GM12878 (cell line): ENCODE measurements at regions of chr11 and their contacts with region 1.

Region 1: GRCh38 chr11:7473717-7474116 is 11.6 kb upstream of the OLFML1 start:
- DNase-seq: peak; percentile 40
- ATAC-seq: peak; percentile 98
- H3K4me3 ChIP-seq: no peak overlapping the region
- H3K27ac ChIP-seq: peak overlapping the region; percentile 18; the same call in 1 of the 2 replicates
- H3K4me1 ChIP-seq: peaks cover 10% of the 10 kb centered on the region
- H3K27me3 ChIP-seq: no peaks in the 10 kb centered on the region
- CTCF ChIP-seq: no peak
- EP300 ChIP-seq: no peak
- POLR2A ChIP-seq: no peak
- RAD21 ChIP-seq: no peak

Region 2: DNA sequence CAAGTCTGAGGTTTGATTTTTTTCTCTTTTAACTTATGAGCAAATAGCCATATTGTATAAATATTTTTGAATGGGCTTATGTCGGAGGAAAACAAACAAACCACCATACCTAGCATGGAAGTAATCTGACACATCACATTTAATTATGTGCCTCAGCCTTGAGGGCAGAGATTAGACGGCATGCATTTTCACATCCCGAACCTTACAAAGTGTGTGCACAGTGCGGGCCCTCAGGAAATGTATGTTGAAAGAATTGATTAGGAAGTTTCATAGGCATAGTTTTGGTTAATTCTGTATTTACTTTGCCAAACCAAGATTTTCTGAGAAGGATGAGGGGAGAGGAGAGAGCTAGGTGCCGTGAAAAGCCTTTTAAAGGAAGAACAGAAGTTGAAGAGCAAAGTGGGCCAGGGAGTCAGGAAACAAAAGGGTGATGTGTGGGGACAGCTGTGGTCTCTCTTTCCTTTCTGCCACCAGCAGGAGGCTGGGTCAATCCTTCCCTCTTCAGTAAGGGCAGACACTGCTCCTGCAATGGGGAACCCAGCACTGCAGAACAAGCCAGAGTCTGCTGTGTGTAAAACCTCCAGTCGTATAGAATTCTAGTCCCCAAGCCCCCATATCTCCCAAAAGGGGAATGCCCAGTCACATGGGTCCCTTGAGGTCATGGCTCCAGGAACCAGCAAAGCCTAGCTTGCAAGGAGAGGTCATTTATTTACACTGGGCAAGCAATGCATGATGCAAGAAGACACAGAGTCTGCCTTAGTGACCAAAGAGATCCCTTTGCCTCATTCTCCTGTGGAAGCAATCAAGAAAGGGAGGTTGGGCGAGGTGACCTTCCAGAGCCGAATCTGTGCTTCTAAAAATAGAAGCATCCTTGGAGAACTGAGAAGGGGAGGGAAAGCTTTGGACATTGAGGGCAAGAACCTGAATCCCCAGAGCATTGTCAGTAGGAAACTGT is 59.5 kb before region 1 on chr11:
- CTCF ChIA-PET with region 1: no interaction called
- POLR2A ChIA-PET with region 1: no interaction called
- RAD21 ChIA-PET with region 1: no interaction called
- SMC1A ChIA-PET with region 1: no interaction called
- in situ Hi-C with region 1: no loop called
- intact Hi-C with region 1: no loop called
- DNase-seq: no peak
- ATAC-seq: peak; percentile 43; the same call in 2 of the 3 replicates
- H3K4me3 ChIP-seq: no peak overlapping the region
- H3K27ac ChIP-seq: no peak overlapping the region
- H3K4me1 ChIP-seq: no peaks in the 10 kb centered on the region
- H3K27me3 ChIP-seq: no peaks in the 10 kb centered on the region; a peak in 1 of 4 replicates
- CTCF ChIP-seq: no peak
- EP300 ChIP-seq: no peak
- POLR2A ChIP-seq: no peak
- RAD21 ChIP-seq: no peak

Region 3: GRCh38 chr11:7442588-7443215 is 31.0 kb before region 1 on chr11:
- CTCF ChIA-PET with region 1: interaction called, 11 read pairs
- POLR2A ChIA-PET with region 1: no interaction called
- RAD21 ChIA-PET with region 1: interaction called, 3 read pairs
- SMC1A ChIA-PET with region 1: no interaction called
- in situ Hi-C with region 1: no loop called
- intact Hi-C with region 1: no loop called
- DNase-seq: peak; percentile 30
- ATAC-seq: peak; percentile 98
- H3K4me3 ChIP-seq: no peak overlapping the region
- H3K27ac ChIP-seq: no peak overlapping the region
- H3K4me1 ChIP-seq: no peaks in the 10 kb centered on the region
- H3K27me3 ChIP-seq: no peaks in the 10 kb centered on the region
- CTCF ChIP-seq: peak; percentile 86 to 92 (median 90)
- EP300 ChIP-seq: no peak
- POLR2A ChIP-seq: no peak
- RAD21 ChIP-seq: peak; percentile 98

Region 4: DNA sequence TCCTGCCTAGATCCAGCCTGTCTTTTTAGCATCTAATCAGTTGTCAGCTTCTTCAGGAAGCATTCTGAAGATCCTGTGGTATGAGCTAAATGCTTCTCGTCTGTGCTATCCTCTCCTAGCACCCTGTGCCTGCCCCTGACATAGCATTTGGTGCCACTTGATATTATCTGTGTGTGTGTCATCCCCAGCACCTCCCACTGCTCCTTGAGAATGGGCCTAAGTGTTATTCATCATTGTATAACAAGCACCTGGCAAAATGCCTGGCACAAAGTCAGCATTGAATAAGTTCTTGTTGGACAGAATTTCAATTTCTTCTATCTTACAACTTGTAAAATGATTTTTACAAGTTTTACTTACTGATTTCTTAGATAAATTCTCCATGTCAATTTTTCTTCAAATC is 16.5 kb before region 1 on chr11:
- CTCF ChIA-PET with region 1: interaction called, 12 read pairs
- POLR2A ChIA-PET with region 1: interaction called, 8 read pairs
- RAD21 ChIA-PET with region 1: interaction called, 12 read pairs
- SMC1A ChIA-PET with region 1: interaction called, 9 read pairs
- in situ Hi-C with region 1: no loop called
- intact Hi-C with region 1: no loop called
- DNase-seq: no peak
- ATAC-seq: no peak
- H3K4me3 ChIP-seq: no peak overlapping the region
- H3K27ac ChIP-seq: no peak overlapping the region
- H3K4me1 ChIP-seq: no peaks in the 10 kb centered on the region
- H3K27me3 ChIP-seq: no peaks in the 10 kb centered on the region
- CTCF ChIP-seq: no peak
- EP300 ChIP-seq: no peak
- POLR2A ChIP-seq: no peak
- RAD21 ChIP-seq: no peak

Region 5: GRCh38 chr11:7462706-7463105 is 11.0 kb before region 1 on chr11:
- CTCF ChIA-PET with region 1: interaction called, 12 read pairs
- POLR2A ChIA-PET with region 1: interaction called, 8 read pairs
- RAD21 ChIA-PET with region 1: interaction called, 12 read pairs
- SMC1A ChIA-PET with region 1: interaction called, 9 read pairs
- in situ Hi-C with region 1: no loop called
- intact Hi-C with region 1: no loop called
- DNase-seq: no peak
- ATAC-seq: peak; percentile 58
- H3K4me3 ChIP-seq: no peak overlapping the region
- H3K27ac ChIP-seq: no peak overlapping the region
- H3K4me1 ChIP-seq: no peaks in the 10 kb centered on the region
- H3K27me3 ChIP-seq: no peaks in the 10 kb centered on the region
- CTCF ChIP-seq: no peak
- EP300 ChIP-seq: no peak
- POLR2A ChIP-seq: no peak
- RAD21 ChIP-seq: no peak

Region 6: DNA sequence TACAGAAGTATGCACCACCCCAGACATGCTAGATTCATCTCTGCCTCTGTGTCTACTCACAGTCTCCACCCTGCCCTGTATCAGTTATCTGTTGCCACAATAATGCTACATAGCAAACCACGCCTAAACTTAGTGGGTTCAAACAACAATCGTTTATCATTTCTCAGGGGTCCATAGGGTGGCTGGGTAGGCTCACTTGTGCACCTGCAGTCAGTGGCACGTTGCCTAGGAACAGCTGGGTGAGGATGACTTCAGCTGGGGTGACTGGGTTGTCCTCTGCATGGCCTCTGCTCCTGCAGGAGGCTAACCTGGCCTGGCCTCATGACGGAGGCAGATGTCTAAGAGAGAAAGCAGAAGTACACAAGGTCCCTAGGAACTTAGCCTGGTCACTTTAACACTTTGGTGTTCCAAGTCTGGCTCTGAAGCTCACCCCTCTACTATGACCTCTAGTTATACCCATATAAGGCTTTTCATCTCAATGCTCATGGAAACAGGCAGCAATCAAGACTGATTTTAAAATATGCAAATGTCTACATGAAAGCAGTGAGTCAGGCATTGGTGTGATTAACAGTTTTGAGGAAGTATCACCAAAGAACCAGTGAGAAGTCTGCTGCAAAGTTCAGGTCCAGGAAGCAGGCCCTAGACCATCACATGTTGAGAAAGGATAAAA is 22.3 kb after region 1 on chr11:
- CTCF ChIA-PET with region 1: no interaction called
- POLR2A ChIA-PET with region 1: no interaction called
- RAD21 ChIA-PET with region 1: interaction called, 5 read pairs
- SMC1A ChIA-PET with region 1: interaction called, 15 read pairs
- in situ Hi-C with region 1: no loop called
- intact Hi-C with region 1: no loop called
- DNase-seq: peak; percentile 47
- ATAC-seq: peak; percentile 91
- H3K4me3 ChIP-seq: no peak overlapping the region
- H3K27ac ChIP-seq: peak overlapping the region; percentile 39
- H3K4me1 ChIP-seq: peaks cover 18% of the 10 kb centered on the region
- H3K27me3 ChIP-seq: no peaks in the 10 kb centered on the region
- CTCF ChIP-seq: no peak
- EP300 ChIP-seq: 0 out of 4 replicates have a peak, but pooled peaks of 1 of the 2 experiments have one; percentile 38
- POLR2A ChIP-seq: no peak
- RAD21 ChIP-seq: no peak